PC-9 (cell line): ENCODE measurements at regions of chr11 and their contacts with region 1.

Region 1: DNA sequence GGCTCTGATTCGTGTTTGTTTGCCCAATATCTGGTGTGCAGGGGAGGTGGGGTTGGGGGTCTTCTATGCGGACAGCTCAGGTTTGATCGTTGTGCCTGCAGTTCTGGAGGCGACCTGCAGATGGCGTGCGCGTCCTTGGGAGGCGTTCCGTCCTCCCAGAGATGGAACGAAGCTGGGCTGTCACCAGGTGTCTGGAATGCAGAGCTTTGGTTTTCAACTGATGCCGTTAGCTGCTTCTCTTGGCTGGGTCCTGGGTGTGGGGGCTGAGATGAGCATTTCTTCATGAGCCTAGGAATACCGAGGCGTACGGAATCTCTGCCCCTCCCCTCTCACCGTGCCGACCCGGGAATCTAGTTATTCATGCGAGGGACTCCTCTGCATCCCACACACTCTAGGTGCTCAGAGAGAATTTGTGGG is 98.6 kb downstream of the CEP164 start:
- DNase-seq: peak in 1 of 2 experiments; percentile 60
- H3K4me3 ChIP-seq: no peak overlapping the region
- H3K27ac ChIP-seq: no peak overlapping the region
- H3K4me1 ChIP-seq: no peaks in the 10 kb centered on the region
- H3K27me3 ChIP-seq: peaks cover 91% of the 10 kb centered on the region
- CTCF ChIP-seq: peak; percentile 100

Region 2: DNA sequence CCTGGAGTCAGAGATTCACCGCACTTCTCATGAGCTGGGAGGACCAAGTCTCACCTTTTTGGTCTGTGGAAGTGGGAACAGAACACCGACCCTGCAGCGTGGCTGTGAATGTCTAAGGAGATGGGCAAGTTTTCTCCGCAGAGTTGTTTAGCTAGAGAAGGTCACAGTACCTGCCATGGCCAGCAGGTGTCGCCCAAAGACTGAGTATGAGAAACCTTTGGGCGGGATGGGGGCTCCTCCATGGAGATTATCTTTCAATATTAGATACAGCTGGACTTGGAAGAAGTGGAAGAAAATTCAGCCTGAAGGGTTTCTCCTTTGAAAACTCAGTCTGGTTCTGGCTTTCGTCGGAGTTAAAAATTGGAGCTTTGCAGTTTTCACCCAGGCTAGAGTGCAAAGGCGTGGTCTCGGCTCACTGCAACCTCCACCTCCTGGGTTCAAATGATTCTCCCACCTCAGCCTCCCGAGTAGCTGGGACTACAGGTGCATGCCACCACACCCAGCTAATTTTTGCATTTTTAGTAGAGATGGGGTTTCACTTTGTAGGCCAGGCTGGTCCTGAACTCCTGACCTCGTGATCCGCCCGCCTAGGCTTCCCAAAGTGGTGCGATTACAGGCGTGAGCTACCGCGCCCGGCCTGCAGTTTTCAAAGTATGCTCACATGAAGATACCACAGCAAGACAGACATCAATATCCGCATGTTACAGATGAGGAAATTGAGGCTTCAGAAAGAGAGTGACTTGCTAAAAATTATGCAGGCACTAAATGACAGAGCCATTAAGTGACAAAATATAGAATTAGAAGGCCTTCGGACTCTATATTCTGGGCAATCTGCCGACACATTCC is 381.4 kb after region 1 on chr11:
- CTCF ChIA-PET with region 1: interaction called, 7 read pairs
- POLR2A ChIA-PET with region 1: no interaction called
- intact Hi-C with region 1: loop called (anchors 2 kb)
- DNase-seq: peak in 1 of 2 experiments; percentile 40
- H3K4me3 ChIP-seq: no peak overlapping the region
- H3K27ac ChIP-seq: no peak overlapping the region
- H3K4me1 ChIP-seq: peaks cover 7% of the 10 kb centered on the region; the same call in 1 of the 2 replicates
- H3K27me3 ChIP-seq: peaks cover 37% of the 10 kb centered on the region
- CTCF ChIP-seq: peak; percentile 98

Region 3: DNA sequence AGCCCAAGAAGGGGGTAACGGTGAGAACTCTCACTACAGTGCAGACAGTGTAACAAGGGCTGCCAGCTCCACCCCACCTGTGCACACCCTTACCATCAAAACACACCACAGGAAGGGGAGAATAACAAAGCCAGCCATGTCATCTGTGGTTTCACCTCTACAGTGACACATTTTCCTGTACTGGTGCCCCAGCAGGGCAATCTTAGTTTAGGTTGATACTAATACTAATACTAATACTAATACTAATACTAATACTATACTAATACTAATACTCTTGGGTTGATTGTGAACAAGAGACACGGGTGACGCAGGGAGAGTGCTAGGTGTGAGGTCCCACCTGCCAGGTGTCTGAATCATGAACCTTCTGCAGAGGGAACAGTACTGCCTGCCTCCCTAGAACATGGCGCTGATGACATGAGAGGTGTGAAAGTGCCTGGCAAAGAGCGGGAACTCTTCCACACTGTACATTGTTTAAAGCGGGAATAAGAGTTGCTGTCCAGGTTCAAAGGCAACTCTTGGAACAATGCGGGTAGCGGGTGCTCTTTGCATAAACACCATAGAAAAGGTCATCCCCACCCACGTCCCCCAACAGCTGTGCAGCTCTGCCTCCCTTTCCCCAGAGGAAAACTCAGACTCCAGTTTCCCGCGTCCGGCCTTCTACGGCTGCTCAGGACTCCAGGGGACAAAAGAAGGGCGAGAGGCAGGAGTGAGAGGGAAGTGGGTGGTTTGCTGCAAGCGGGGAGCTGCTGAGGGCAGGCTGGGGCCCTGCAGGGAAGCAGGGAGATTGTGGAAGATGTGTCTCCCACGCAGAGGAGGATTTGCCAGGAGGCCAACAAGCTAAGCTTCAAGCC is 625.6 kb after region 1 on chr11:
- CTCF ChIA-PET with region 1: no interaction called
- POLR2A ChIA-PET with region 1: no interaction called
- intact Hi-C with region 1: loop called (anchors 5 kb)
- DNase-seq: no peak
- H3K4me3 ChIP-seq: no peak overlapping the region
- H3K27ac ChIP-seq: no peak overlapping the region
- H3K4me1 ChIP-seq: peaks cover 2% of the 10 kb centered on the region; the same call in 1 of the 2 replicates
- H3K27me3 ChIP-seq: peaks cover 16% of the 10 kb centered on the region
- CTCF ChIP-seq: no peak

Region 4: DNA sequence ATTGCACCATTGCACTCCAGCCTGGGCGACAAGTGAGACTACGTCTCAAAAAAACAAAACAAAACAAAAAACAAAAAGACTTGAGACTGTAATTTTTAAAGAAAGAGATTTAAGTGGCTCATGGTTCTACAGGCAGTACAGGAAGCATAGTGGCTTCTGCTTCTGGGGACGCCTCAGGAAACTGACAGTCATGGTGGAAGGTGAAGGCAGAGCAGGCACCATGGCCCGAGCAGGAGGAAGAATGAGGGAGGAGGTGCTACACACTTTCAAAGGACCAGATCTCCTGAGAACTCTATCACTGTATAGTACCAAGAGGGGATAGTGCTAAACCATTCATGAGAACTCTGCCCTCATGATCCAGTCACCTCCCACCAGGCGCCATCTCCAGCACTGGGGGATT is 1831.9 kb after region 1 on chr11:
- CTCF ChIA-PET with region 1: interaction called, 10 read pairs
- POLR2A ChIA-PET with region 1: no interaction called
- intact Hi-C with region 1: no loop called
- DNase-seq: no peak
- H3K4me3 ChIP-seq: no peak overlapping the region
- H3K27ac ChIP-seq: no peak overlapping the region
- H3K4me1 ChIP-seq: no peaks in the 10 kb centered on the region
- H3K27me3 ChIP-seq: no peaks in the 10 kb centered on the region
- CTCF ChIP-seq: no peak